AG04449 (cell line): ENCODE measurements at regions of chr1 and their contacts with region 1.

Region 1: GRCh38 chr1:86704458-86704971 is at the start of gene SH3GLB1:
- DNase-seq: no peak
- H3K4me3 ChIP-seq: peak within 1 kb of the TSS; percentile 83
- CTCF ChIP-seq: peak; percentile 89

Region 2: DNA sequence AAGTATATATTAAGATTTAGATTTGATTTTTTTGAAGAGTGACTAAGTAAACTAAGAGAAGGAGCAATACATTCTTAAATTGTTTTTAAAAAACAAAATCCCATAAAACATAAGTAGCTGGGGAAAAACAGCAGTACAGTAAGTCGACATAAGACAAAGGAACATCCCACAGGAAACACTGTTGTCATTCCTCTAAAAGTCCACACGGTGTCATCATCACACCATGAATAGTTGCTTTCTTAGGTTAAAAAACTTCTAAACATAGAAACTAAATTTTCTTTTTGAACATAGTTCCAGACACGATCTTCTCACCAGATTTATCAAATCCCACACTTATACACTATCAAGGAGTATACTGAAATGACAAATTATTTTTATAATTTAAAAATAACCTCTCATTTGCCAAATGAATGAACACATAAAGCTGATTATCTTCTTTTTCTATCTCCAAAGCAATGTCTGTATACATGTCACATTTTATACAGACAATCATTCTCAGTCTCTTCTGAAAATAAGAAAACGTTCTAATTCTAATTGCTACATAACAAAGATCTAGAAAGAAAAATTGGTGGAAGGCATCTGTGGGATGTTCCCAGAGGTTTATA is 324.2 kb before region 1 on chr1:
- CTCF ChIA-PET with region 1: interaction called, 17 read pairs
- POLR2A ChIA-PET with region 1: no interaction called
- DNase-seq: peak; percentile 45
- H3K4me3 ChIP-seq: no peak overlapping the region
- CTCF ChIP-seq: peak; percentile 52

Region 3: DNA sequence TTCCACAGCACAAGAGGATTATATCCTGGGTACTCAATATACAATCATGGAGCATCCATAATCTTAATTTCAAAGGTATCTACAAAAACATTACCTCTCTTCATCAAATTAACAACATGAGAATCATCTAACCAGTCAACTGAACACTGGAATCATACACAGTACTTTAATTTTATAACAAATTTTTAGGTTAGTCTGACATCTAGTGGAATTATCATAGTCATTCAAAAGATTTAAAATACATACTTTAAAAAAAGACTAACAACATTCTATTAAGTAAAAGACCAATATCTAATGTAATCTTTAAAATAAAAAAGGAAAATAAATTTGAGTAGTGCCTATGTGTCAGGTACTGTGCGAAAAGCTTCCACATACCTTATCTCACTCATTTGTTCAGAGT is 16.9 kb before region 1 on chr1:
- CTCF ChIA-PET with region 1: interaction called, 10 read pairs
- POLR2A ChIA-PET with region 1: no interaction called
- DNase-seq: no peak
- H3K4me3 ChIP-seq: no peak overlapping the region
- CTCF ChIP-seq: no peak

Region 4: DNA sequence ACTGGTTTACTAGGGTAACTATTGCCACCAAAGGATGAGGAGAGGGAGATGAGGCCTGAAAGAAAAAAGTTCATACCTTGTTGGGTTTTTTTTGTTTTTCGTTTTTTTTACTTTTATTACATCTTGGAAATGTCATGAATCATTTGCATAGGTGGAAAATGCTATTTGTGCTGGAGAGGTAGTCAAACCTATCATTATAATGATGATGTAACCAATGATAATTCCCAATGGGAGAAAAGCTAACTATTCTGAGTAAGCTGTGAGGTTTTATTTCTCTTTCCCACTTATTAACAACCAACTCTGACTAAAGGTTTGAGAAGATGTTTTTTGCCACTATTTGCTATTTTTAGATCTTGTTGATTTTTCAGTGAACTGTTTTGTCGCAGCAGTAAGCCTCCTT is 28.8 kb after region 1 on chr1:
- CTCF ChIA-PET with region 1: interaction called, 16 read pairs
- POLR2A ChIA-PET with region 1: interaction called, 3 read pairs
- DNase-seq: no peak
- H3K4me3 ChIP-seq: no peak overlapping the region
- CTCF ChIP-seq: no peak

Region 5: DNA sequence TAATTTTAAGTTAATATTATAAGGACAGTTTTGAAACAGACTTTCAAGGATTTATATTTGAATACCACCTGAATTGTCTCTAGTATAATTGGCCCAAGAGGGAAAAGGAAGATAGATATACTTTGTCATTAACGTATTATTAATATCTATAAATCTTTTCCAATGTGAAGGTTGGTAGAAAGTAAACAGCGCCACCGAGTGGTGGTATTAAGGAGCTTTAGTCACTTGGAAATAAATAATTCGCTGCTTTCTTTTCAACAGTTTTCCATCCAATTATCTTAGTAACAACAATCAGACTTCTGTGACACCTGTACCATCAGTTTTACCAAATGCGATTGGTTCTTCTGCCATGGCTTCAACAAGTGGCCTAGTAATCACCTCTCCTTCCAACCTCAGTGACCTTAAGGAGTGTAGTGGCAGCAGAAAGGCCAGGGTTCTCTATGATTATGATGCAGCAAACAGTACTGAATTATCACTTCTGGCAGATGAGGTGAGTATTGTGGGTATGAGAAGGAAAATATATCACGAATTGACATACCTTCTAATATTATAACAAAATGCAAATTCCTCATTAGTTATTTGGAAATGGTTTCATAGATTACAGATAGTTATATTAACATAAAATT is 37.5 kb after region 1 on chr1:
- CTCF ChIA-PET with region 1: interaction called, 11 read pairs
- POLR2A ChIA-PET with region 1: interaction called, 4 read pairs
- DNase-seq: no peak
- H3K4me3 ChIP-seq: no peak overlapping the region
- CTCF ChIP-seq: peak; percentile 22

Region 6: DNA sequence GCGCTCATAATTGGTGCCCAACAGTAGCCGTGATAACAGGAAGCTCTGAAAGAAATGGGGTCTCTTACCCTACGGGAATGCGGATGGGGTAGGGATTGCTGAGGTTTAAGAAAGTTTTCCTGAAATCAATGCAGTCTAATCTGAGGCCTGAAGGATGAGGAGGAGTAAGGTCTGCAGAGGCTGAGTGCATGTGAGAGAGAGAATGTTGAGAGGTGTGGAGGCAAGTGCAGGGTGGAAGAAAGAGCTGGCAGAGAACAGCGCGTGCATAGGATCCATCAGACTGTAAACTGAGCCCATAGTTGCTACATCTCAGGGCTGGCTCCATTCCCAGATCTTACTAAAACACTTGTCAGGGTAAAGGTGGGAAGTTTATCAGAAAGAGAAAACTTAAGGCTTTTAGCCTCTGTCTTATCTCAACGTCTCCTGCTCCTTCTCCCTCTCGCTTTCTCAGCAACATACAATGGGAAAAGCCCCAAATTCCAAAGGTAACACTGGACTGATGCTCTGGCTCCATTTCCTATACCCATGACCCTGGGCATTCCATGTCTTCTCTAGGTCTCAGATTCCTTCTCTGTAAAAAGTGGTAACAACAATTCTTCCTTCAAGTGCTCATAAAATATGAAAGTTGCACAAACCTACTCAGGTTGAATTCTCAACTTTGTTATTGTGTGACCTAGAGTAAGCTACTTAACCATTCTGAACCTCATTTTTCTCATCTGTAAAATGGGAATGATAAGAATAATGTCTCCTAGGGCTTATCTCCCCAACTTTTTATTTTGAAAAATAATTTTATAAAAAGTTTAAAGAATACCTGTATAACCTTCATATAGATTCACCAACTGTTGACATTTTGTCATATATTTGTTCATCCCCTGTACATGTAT is 75.0 kb after region 1 on chr1:
- CTCF ChIA-PET with region 1: interaction called, 14 read pairs
- POLR2A ChIA-PET with region 1: no interaction called
- DNase-seq: no peak
- H3K4me3 ChIP-seq: no peak overlapping the region
- CTCF ChIP-seq: no peak